AG04450 (cell line): ENCODE measurements at regions of chr2 and their contacts with region 1.

Region 1: GRCh38 chr2:174465327-174465726 is 21.5 kb downstream of the GPR155 start:
- DNase-seq: no peak
- H3K4me3 ChIP-seq: no peak overlapping the region
- H3K27ac ChIP-seq: no peak overlapping the region
- H3K27me3 ChIP-seq: no peaks in the 10 kb centered on the region
- CTCF ChIP-seq: peak; percentile 11; the same call in 1 of the 2 replicates

Region 2: DNA sequence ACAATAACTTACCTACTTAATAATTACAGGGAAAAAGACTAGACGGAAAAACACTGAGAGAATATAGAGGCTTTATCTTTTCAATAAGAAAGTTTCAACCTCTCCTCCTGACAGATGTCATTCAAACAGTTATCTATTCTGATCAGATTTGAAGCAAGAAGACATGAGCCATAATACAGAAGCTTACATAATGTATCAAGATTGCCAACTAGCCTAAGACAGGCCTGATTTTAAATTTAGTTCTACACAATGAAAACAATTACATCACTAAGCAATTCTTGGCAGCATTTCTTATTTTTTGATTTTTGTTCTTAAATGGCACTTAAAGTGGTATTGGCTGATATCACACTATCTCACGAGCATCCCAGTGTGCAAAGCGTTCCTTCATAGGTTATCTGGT is 20.1 kb before region 1 on chr2:
- CTCF ChIA-PET with region 1: interaction called, 15 read pairs
- POLR2A ChIA-PET with region 1: no interaction called
- DNase-seq: no peak
- H3K4me3 ChIP-seq: no peak overlapping the region
- H3K27ac ChIP-seq: no peak overlapping the region
- H3K27me3 ChIP-seq: no peaks in the 10 kb centered on the region
- CTCF ChIP-seq: no peak

Region 3: DNA sequence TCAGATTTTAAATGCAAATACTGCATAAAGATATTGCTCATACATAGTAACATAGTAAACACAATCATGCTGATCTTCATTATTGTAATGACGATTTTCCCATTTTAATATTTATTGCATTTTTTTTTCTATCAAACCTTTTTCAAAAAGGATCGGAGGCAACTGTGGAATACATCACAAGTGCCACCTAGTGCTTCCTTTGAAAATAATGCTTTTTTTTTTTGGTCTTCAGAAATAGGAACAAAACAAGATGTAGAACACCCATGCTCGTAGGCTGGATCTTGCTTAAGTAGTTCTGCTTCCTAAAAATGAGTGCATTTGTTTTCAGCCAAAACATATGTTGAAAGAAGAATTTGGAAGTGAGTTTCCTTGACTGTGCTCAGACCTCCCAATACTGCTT is 57.2 kb after region 1 on chr2:
- CTCF ChIA-PET with region 1: interaction called, 61 read pairs
- POLR2A ChIA-PET with region 1: no interaction called
- DNase-seq: no peak
- H3K4me3 ChIP-seq: no peak overlapping the region
- H3K27ac ChIP-seq: no peak overlapping the region
- H3K27me3 ChIP-seq: peaks cover 20% of the 10 kb centered on the region
- CTCF ChIP-seq: peak; percentile 40

Region 4: GRCh38 chr2:174561283-174561971 is 96.1 kb after region 1 on chr2:
- CTCF ChIA-PET with region 1: interaction called, 11 read pairs
- POLR2A ChIA-PET with region 1: no interaction called
- DNase-seq: peak; percentile 16
- H3K4me3 ChIP-seq: no peak overlapping the region
- H3K27ac ChIP-seq: no peak overlapping the region
- H3K27me3 ChIP-seq: no peaks in the 10 kb centered on the region
- CTCF ChIP-seq: no peak

Region 5: GRCh38 chr2:174688079-174688478 is 222.8 kb after region 1 on chr2:
- CTCF ChIA-PET with region 1: interaction called, 142 read pairs
- POLR2A ChIA-PET with region 1: no interaction called
- DNase-seq: no peak
- H3K4me3 ChIP-seq: no peak overlapping the region
- H3K27ac ChIP-seq: no peak overlapping the region
- H3K27me3 ChIP-seq: peaks cover 6% of the 10 kb centered on the region
- CTCF ChIP-seq: peak; percentile 55